Activated CD8-positive, alpha-beta T cell treated with anti-CD3 and anti-CD28 coated beads for 36 hours (primary cell): ENCODE measurements at regions of chr16 and their contacts with region 1.

Region 1: GRCh38 chr16:68022704-68023522 is at the starts of genes DDX28 and DUS2:
- DNase-seq: peak; percentile 95
- ATAC-seq: peak; percentile 93
- H3K4me3 Mint-ChIP-seq: peak within 1 kb of the TSS; percentile 87
- H3K27ac Mint-ChIP-seq: peak within 1 kb of the TSS; percentile 96
- H3K4me1 Mint-ChIP-seq: peaks cover 23% of the 10 kb centered on the region
- H3K27me3 Mint-ChIP-seq: no peaks in the 10 kb centered on the region
- CTCF ChIP-seq: no peak
- total RNA-seq, gene DDX28: 16.6 to 17.3 TPM
- total RNA-seq, gene DUS2: 34.2 to 35.1 TPM

Region 2: GRCh38 chr16:67993189-67994039 is 29.5 kb before region 1 on chr16:
- CTCF ChIA-PET with region 1: interaction called, 22 read pairs
- POLR2A ChIA-PET with region 1: interaction called, 8 read pairs
- intact Hi-C with region 1: no loop called
- DNase-seq: peak; percentile 90
- ATAC-seq: peak; percentile 84
- H3K4me3 Mint-ChIP-seq: peak overlapping the region; percentile 75
- H3K27ac Mint-ChIP-seq: peak overlapping the region; percentile 98
- H3K4me1 Mint-ChIP-seq: peaks cover 40% of the 10 kb centered on the region
- H3K27me3 Mint-ChIP-seq: no peaks in the 10 kb centered on the region
- CTCF ChIP-seq: peak; percentile 97

Region 3: DNA sequence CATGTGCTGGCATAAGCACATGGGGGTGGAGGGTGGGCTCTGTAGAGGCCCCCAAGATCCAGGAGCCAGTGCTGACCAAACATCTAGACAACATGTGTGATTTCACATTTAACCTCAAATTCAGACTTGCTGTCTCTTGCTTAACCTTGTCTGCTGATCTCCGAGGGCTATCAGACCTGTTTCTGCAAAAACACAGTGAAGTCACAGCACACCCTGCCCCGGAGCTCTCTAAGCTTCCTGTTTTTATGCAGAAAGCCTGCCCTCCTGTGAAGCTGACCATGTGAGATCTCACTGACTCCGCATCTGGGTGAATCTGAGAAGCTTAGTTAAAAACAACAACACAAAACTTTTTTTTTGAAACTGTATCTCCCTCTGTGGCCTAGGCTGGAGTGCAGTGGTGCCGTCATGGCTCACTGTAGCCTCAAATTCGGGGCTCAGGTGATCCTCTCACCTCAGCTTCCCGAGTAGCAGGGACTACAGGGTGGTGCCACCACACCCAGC is 17.1 kb before region 1 on chr16:
- CTCF ChIA-PET with region 1: interaction called, 7 read pairs
- POLR2A ChIA-PET with region 1: interaction called, 23 read pairs
- intact Hi-C with region 1: no loop called
- DNase-seq: peak; percentile 44
- ATAC-seq: peak; percentile 77
- H3K4me3 Mint-ChIP-seq: no peak overlapping the region
- H3K27ac Mint-ChIP-seq: peak overlapping the region; percentile 95
- H3K4me1 Mint-ChIP-seq: peaks cover 24% of the 10 kb centered on the region
- H3K27me3 Mint-ChIP-seq: no peaks in the 10 kb centered on the region
- CTCF ChIP-seq: no peak